CD14-positive monocyte (primary cell): ENCODE measurements at regions of chr19 and their contacts with region 1.

Region 1: GRCh38 chr19:58182989-58183816 is at the start of gene ZNF274:
- DNase-seq: peak; percentile 92 to 95 (median 95)
- H3K4me3 ChIP-seq: peak within 1 kb of the TSS; percentile 60 to 84 (median 67)
- H3K4me3 Mint-ChIP-seq: peak within 1 kb of the TSS; percentile 83 to 91
- H3K27ac ChIP-seq: peak within 1 kb of the TSS; percentile 97 to 99
- H3K27ac Mint-ChIP-seq: peak within 1 kb of the TSS; percentile 98 to 100 (median 99)
- H3K4me1 ChIP-seq: peaks cover 13 to 14% of the 10 kb centered on the region in 2 donors
- H3K4me1 Mint-ChIP-seq: peaks cover 14% of the 10 kb centered on the region
- H3K27me3 ChIP-seq: no peaks in the 10 kb centered on the region
- H3K27me3 Mint-ChIP-seq: peaks cover 1 to 5% (median 1%) of the 10 kb centered on the region in 3 donors
- CTCF ChIP-seq: no peak
- polyA plus RNA-seq, gene ZNF274: 5.8 to 10.1 (median 9.0) TPM

Region 2: DNA sequence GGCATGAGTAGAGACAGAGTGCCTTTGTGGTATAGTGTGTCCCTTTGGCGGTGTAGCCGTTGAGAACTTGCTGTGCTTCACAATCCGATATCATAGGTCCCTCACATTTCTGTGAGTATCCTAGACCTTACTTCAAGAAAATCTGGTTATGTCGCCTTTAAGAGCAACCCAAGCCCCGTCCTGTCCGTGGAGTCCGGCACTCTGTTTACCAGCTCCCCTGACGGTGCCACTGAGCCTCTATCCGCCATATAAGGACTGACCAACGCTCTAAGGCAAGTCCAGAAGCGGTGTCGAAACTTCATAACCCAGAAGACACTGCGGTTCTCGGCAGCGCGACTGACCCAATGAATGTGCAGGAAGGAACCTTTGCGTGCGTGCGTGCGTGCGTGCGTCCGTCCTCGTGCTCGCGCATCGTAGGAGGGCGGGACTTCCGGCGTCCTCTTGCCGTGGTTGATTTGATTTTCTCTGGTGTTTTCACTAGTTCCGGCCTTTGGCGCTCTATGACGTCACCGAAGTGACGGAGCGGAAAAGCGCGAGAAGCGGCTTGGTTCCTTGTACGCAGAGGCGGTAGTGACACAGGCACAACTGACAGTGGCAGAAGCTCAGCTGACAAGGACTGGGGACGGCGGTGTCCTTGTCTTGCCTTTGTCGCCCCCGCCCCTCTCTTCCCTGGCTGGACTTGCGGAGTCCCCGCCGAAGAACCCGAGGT is 820.1 kb before region 1 on chr19 and contains the starts of genes TRAPPC2B and ZNF547:
- intact Hi-C with region 1: loop called in 1 of 2 experiments (anchors 10 kb)
- DNase-seq: peak; percentile 97 to 100 (median 100)
- H3K4me3 ChIP-seq: peak within 1 kb of the TSS; percentile 40 to 76 (median 54)
- H3K4me3 Mint-ChIP-seq: peak within 1 kb of the TSS; percentile 81 to 86
- H3K27ac ChIP-seq: peak within 1 kb of the TSS; percentile 83 to 89
- H3K27ac Mint-ChIP-seq: peak within 1 kb of the TSS; percentile 85 to 97 (median 93)
- H3K4me1 ChIP-seq: peaks cover 12 to 14% of the 10 kb centered on the region in 2 donors
- H3K4me1 Mint-ChIP-seq: peaks cover 10% of the 10 kb centered on the region
- H3K27me3 ChIP-seq: no peaks in the 10 kb centered on the region
- H3K27me3 Mint-ChIP-seq: peaks cover 1 to 6% (median 4%) of the 10 kb centered on the region in 3 donors
- CTCF ChIP-seq: no peak
- polyA plus RNA-seq, gene TRAPPC2B: 7.4 to 13.9 (median 11.5) TPM
- polyA plus RNA-seq, gene ZNF547: 0.30 to 0.32 TPM in 2 of 3 donors, not detected in the other

Region 3: GRCh38 chr19:57978586-57979289 is 204.5 kb before region 1 on chr19:
- intact Hi-C with region 1: no loop called
- DNase-seq: no peak
- H3K4me3 ChIP-seq: peak overlapping the region in 1 of 3 experiments; percentile 37
- H3K4me3 Mint-ChIP-seq: no peak overlapping the region
- H3K27ac ChIP-seq: no peak overlapping the region
- H3K27ac Mint-ChIP-seq: no peak overlapping the region
- H3K4me1 ChIP-seq: no peaks in the 10 kb centered on the region
- H3K4me1 Mint-ChIP-seq: no peaks in the 10 kb centered on the region
- H3K27me3 ChIP-seq: no peaks in the 10 kb centered on the region
- H3K27me3 Mint-ChIP-seq: no peaks in the 10 kb centered on the region
- CTCF ChIP-seq: no peak

Region 4: DNA sequence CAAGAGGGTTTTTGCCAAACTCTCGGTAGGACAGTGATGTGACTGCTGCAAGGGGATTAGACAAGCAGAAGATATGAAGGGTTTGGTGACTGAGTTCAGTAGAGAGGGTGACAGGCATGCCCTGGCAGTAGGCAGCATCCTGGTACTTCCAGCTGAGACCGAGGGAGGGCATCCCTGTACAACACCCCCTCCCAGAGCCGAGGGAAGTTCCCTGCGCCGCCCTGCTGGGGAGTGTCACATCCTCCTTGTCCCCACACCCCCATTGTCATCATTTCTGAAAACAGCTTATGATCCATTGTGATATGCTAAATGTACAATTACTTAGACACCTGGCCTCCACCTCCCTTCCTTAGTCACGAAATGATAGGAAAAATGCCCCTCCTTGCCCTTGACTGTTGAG is 60.1 kb after region 1 on chr19:
- intact Hi-C with region 1: no loop called
- DNase-seq: no peak
- H3K4me3 ChIP-seq: peak overlapping the region in 1 of 3 experiments; percentile 26
- H3K4me3 Mint-ChIP-seq: no peak overlapping the region
- H3K27ac ChIP-seq: no peak overlapping the region
- H3K27ac Mint-ChIP-seq: no peak overlapping the region
- H3K4me1 ChIP-seq: no peaks in the 10 kb centered on the region
- H3K4me1 Mint-ChIP-seq: no peaks in the 10 kb centered on the region
- H3K27me3 ChIP-seq: no peaks in the 10 kb centered on the region
- H3K27me3 Mint-ChIP-seq: peaks cover 0 to 3% (median 3%) of the 10 kb centered on the region in 3 donors
- CTCF ChIP-seq: no peak

Region 5: DNA sequence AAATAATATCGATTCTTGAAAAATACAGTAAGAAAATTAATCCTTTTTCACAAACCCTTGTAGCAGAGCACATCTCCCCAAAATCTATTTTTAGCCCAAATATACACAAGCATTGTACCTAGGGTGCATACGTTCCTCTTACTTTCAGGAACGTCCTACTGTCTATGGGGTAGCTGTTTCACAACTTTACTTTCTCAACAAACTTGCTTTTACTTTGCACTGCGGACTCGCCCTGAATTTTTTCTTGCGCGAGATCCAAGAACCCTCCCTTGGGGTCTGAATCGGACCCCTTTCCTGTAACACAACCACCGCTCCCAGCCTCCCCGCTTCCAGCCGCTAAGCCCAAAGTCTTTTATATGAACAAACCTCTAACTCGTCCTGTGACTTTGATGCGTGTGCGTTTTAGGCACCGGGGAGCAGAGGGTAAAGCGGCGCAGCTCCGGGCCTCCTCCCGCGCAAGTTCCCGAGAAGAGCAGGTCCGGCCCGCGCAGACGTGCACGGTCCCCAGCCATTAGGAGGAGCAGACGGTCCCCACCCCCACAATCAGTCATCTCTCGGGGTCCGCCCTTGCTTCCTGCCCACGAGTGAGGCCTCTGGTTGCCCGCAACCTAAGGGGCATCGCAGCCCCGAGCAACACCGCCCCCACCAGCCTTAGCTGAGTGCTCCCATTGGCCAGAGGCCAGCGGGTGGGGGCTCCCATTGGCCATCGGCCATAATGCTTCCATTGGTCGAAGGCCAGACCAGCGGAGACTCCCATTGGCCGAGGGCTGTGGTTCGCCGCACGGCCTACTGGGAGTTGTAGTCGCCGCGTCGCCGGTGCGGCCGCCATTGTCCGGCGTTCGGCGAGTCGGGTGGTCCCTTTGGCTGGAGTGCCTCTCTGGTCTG is 95.2 kb after region 1 on chr19 and contains the start of gene ZNF8:
- intact Hi-C with region 1: loop called (anchors 5 kb)
- DNase-seq: peak; percentile 94 to 98 (median 96)
- H3K4me3 ChIP-seq: peak within 1 kb of the TSS; percentile 67 to 91 (median 89)
- H3K4me3 Mint-ChIP-seq: peak within 1 kb of the TSS; percentile 92 to 95
- H3K27ac ChIP-seq: peak within 1 kb of the TSS; percentile 75 to 87
- H3K27ac Mint-ChIP-seq: peak within 1 kb of the TSS; percentile 86 to 95 (median 94)
- H3K4me1 ChIP-seq: peaks cover 15 to 25% of the 10 kb centered on the region in 2 donors
- H3K4me1 Mint-ChIP-seq: peaks cover 20% of the 10 kb centered on the region
- H3K27me3 ChIP-seq: no peaks in the 10 kb centered on the region
- H3K27me3 Mint-ChIP-seq: peaks cover 0 to 3% (median 2%) of the 10 kb centered on the region in 3 donors
- CTCF ChIP-seq: no peak
- polyA plus RNA-seq, gene ZNF8: 0.05 to 2.4 (median 0.25) TPM

Region 6: DNA sequence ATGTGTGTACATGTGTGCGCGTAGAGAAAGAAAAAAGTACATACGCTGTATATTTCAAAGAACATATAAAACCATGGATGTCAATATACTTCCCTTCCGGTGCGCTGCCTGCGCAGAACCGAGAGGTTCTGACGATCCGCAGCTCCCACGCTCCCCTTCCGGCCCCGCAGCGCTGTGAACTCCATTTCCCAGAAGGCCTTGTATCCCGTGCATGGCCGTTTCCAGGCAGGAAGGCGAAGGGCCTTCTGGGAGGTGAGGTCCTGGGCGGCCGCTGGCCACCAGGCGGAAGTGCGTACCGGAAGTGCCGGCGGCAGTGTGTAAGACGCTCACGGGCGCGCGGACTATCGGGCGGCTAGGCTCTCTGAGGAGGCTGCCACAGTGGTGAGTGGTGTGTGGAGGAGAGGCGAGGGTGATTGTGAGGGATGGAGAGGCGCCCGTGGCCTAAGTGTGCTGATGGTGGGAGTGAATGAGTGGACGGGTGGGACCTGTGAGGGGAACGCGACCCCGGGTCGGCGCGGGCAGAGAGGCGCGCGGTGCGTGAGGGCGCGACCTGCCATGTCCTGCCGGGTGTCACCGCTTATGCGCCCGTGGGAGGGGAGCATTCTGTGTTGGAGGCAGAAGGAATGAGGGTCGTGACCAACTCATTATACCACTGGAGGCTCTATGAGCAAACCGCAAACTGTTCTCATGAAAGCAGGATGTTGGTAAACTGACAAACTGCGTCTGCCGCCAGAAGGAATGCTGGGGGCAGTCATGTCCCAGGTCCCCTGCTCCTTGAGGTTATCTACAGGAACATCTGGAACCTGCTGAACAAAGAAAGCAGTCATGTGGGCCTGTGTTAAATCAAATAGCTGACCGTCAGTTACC is 122.1 kb after region 1 on chr19 and contains the start of gene ERVK3-1:
- intact Hi-C with region 1: loop called (anchors 5 kb)
- DNase-seq: peak; percentile 99
- H3K4me3 ChIP-seq: peak within 1 kb of the TSS; percentile 60 to 90 (median 80)
- H3K4me3 Mint-ChIP-seq: peak within 1 kb of the TSS; percentile 91 to 99
- H3K27ac ChIP-seq: peak within 1 kb of the TSS; percentile 65 to 97
- H3K27ac Mint-ChIP-seq: peak within 1 kb of the TSS; percentile 96 to 99 (median 98)
- H3K4me1 ChIP-seq: peaks cover 12 to 16% of the 10 kb centered on the region in 2 donors
- H3K4me1 Mint-ChIP-seq: peaks cover 16% of the 10 kb centered on the region
- H3K27me3 ChIP-seq: no peaks in the 10 kb centered on the region
- H3K27me3 Mint-ChIP-seq: peaks cover 0 to 2% (median 0%) of the 10 kb centered on the region in 3 donors
- CTCF ChIP-seq: no peak
- polyA plus RNA-seq, gene ERVK3-1: 34.6 to 61.5 (median 38.8) TPM